CD4-positive, alpha-beta T cell (primary cell): ENCODE measurements at regions of chr2 and their contacts with region 1.

Region 1: GRCh38 chr2:174697255-174697654 is 67.0 kb downstream of the CHRNA1 start:
- DNase-seq: peak; percentile 42 to 81 (median 50)
- ATAC-seq: peak; percentile 89
- H3K4me3 ChIP-seq: no peak overlapping the region
- H3K4me3 Mint-ChIP-seq: no peak overlapping the region
- H3K27ac ChIP-seq: no peak overlapping the region
- H3K27ac Mint-ChIP-seq: no peak overlapping the region
- H3K4me1 ChIP-seq: no peaks in the 10 kb centered on the region
- H3K4me1 Mint-ChIP-seq: no peaks in the 10 kb centered on the region
- H3K27me3 ChIP-seq: no peaks in the 10 kb centered on the region
- H3K27me3 Mint-ChIP-seq: peaks cover 4% of the 10 kb centered on the region
- CTCF ChIP-seq: peak; percentile 86

Region 2: DNA sequence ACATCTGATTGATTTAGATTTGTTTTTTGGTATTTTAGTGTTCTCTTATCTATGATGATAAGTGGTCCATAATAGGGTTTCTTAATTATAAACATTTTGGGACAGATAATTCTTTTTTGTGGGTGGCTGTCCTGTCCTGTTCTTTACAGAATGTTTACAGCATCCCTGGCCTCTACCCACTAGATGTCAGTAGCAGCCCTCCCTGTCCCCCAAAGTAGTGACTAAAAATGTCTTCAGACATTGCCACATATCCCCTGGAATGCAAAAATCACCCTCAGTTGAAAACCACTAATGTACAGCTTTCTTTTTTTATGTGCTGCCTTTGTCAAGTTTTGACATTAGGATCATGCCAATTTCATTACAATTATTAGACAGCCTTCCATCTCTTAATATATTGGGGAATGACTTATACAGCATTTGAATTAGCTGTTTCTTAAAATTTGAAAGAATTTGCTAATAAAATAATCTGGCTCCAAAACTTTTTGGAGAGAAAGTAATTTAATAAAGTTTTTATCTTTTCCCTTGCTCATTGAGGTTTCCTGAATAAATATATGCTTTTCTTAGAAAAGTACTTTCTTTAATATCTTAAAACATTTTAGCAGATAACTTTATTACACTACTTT is 119.2 kb before region 1 on chr2:
- CTCF ChIA-PET with region 1: interaction called, 12 read pairs
- POLR2A ChIA-PET with region 1: no interaction called
- intact Hi-C with region 1: no loop called
- DNase-seq: peak in 12 of 14 experiments; percentile 26 to 85 (median 51)
- ATAC-seq: peak; percentile 82
- H3K4me3 ChIP-seq: no peak overlapping the region
- H3K4me3 Mint-ChIP-seq: no peak overlapping the region
- H3K27ac ChIP-seq: no peak overlapping the region
- H3K27ac Mint-ChIP-seq: peak overlapping the region; percentile 95
- H3K4me1 ChIP-seq: peaks cover 56% of the 10 kb centered on the region
- H3K4me1 Mint-ChIP-seq: peaks cover 94% of the 10 kb centered on the region
- H3K27me3 ChIP-seq: no peaks in the 10 kb centered on the region
- H3K27me3 Mint-ChIP-seq: no peaks in the 10 kb centered on the region
- CTCF ChIP-seq: peak; percentile 75

Region 3: GRCh38 chr2:174985630-174986029 is 288.4 kb after region 1 on chr2:
- CTCF ChIA-PET with region 1: interaction called, 5 read pairs
- POLR2A ChIA-PET with region 1: interaction called, 3 read pairs
- intact Hi-C with region 1: loop called (anchors 1 to 2 kb)
- DNase-seq: no peak
- ATAC-seq: no peak
- H3K4me3 ChIP-seq: no peak overlapping the region
- H3K4me3 Mint-ChIP-seq: no peak overlapping the region
- H3K27ac ChIP-seq: no peak overlapping the region
- H3K27ac Mint-ChIP-seq: no peak overlapping the region
- H3K4me1 ChIP-seq: peaks cover 4% of the 10 kb centered on the region
- H3K4me1 Mint-ChIP-seq: no peaks in the 10 kb centered on the region
- H3K27me3 ChIP-seq: no peaks in the 10 kb centered on the region
- H3K27me3 Mint-ChIP-seq: peaks cover 8% of the 10 kb centered on the region
- CTCF ChIP-seq: peak; percentile 39

Region 4: GRCh38 chr2:175282290-175282689 is 585.0 kb after region 1 on chr2:
- CTCF ChIA-PET with region 1: no interaction called
- POLR2A ChIA-PET with region 1: no interaction called
- intact Hi-C with region 1: loop called (anchors 2 to 5 kb)
- DNase-seq: peak in 3 of 14 experiments; percentile 13 to 37 (median 23)
- ATAC-seq: peak; percentile 44
- H3K4me3 ChIP-seq: no peak overlapping the region
- H3K4me3 Mint-ChIP-seq: no peak overlapping the region
- H3K27ac ChIP-seq: no peak overlapping the region
- H3K27ac Mint-ChIP-seq: no peak overlapping the region
- H3K4me1 ChIP-seq: no peaks in the 10 kb centered on the region
- H3K4me1 Mint-ChIP-seq: no peaks in the 10 kb centered on the region
- H3K27me3 ChIP-seq: no peaks in the 10 kb centered on the region
- H3K27me3 Mint-ChIP-seq: peaks cover 7% of the 10 kb centered on the region
- CTCF ChIP-seq: peak; percentile 45

Region 5: GRCh38 chr2:176653479-176654443 is 1956.5 kb after region 1 on chr2:
- CTCF ChIA-PET with region 1: no interaction called
- POLR2A ChIA-PET with region 1: no interaction called
- intact Hi-C with region 1: loop called in 1 of 2 experiments (anchors 5 kb)
- DNase-seq: peak in 6 of 14 experiments; percentile 7 to 52 (median 18)
- ATAC-seq: peak; percentile 51
- H3K4me3 ChIP-seq: no peak overlapping the region
- H3K4me3 Mint-ChIP-seq: no peak overlapping the region
- H3K27ac ChIP-seq: no peak overlapping the region
- H3K27ac Mint-ChIP-seq: no peak overlapping the region
- H3K4me1 ChIP-seq: peaks cover 3% of the 10 kb centered on the region
- H3K4me1 Mint-ChIP-seq: peaks cover 5% of the 10 kb centered on the region
- H3K27me3 ChIP-seq: peaks cover 10 to 23% of the 10 kb centered on the region in 2 experiments
- H3K27me3 Mint-ChIP-seq: peaks cover 79% of the 10 kb centered on the region
- CTCF ChIP-seq: peak; percentile 30